T-cell (primary cell): ENCODE measurements at regions of chr1 and their contacts with region 1.

Region 1: GRCh38 chr1:154081386-154082126 is 73.3 kb downstream of the NUP210L start:
- DNase-seq: no peak
- ATAC-seq: no peak
- H3K4me3 ChIP-seq: no peak overlapping the region
- H3K4me3 Mint-ChIP-seq: no peak overlapping the region
- H3K27ac ChIP-seq: no peak overlapping the region
- H3K27ac Mint-ChIP-seq: no peak overlapping the region
- H3K4me1 ChIP-seq: no peaks in the 10 kb centered on the region
- H3K4me1 Mint-ChIP-seq: no peaks in the 10 kb centered on the region
- H3K27me3 ChIP-seq: peaks cover 0 to 9% of the 10 kb centered on the region in 2 experiments
- H3K27me3 Mint-ChIP-seq: peaks cover 3 to 5% of the 10 kb centered on the region in 2 donors

Region 2: DNA sequence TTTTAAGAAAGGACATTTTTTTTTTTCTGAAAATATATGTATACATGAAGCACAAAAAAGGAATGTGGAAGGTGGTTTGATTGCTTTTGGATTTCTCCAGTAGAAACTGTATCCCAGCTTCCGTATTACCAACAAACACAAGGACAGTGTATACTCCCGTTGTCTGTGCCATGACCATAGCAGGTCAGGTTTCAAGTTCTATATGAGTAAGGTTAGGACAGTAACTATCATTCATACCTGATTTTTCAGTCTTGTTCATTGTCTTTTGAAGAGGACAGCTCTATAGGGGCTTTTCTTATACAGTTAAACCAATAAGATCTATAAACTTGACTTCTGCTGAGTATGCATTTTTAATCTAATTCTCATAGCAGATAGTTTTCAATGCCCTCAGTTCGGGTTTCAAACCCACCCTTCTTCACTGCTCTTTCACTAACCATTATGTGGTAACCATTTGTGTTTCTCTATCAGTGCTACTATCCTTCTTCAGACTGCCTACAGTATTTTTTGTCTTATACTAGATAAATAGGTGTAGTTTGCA is 158.8 kb after region 1 on chr1:
- CTCF ChIA-PET with region 1: no interaction called
- POLR2A ChIA-PET with region 1: no interaction called
- DNase-seq: no peak
- ATAC-seq: no peak
- H3K4me3 ChIP-seq: no peak overlapping the region
- H3K4me3 Mint-ChIP-seq: no peak overlapping the region
- H3K27ac ChIP-seq: no peak overlapping the region
- H3K27ac Mint-ChIP-seq: peak overlapping the region; percentile 57 to 72
- H3K4me1 ChIP-seq: no peaks in the 10 kb centered on the region
- H3K4me1 Mint-ChIP-seq: peaks cover 35 to 43% (median 39%) of the 10 kb centered on the region in 3 donors
- H3K27me3 ChIP-seq: no peaks in the 10 kb centered on the region
- H3K27me3 Mint-ChIP-seq: no peaks in the 10 kb centered on the region

Region 3: GRCh38 chr1:155099331-155099730 is 1017.8 kb after region 1 on chr1:
- CTCF ChIA-PET with region 1: no interaction called
- POLR2A ChIA-PET with region 1: interaction called in 1 of 2 experiments, 18 read pairs
- DNase-seq: no peak
- ATAC-seq: no peak
- H3K4me3 ChIP-seq: no peak overlapping the region
- H3K4me3 Mint-ChIP-seq: no peak overlapping the region
- H3K27ac ChIP-seq: no peak overlapping the region
- H3K27ac Mint-ChIP-seq: no peak overlapping the region
- H3K4me1 ChIP-seq: no peaks in the 10 kb centered on the region
- H3K4me1 Mint-ChIP-seq: no peaks in the 10 kb centered on the region
- H3K27me3 ChIP-seq: peaks cover 0 to 30% of the 10 kb centered on the region in 2 experiments
- H3K27me3 Mint-ChIP-seq: peaks cover 7 to 9% of the 10 kb centered on the region in 2 donors